ENCODE measurements at regions of chr2 and their contacts with region 1.

Region 1: GRCh38 chr2:98909317-98910211 is 26.5 kb downstream of the CRACDL start:
- DNase-seq: peak; percentile 91
- H3K4me3 ChIP-seq: peak overlapping the region in 1 of 3 experiments; percentile 25
- H3K27ac ChIP-seq: peak overlapping the region; percentile 84
- H3K4me1 ChIP-seq: peaks cover 38% of the 10 kb centered on the region
- H3K27me3 ChIP-seq: no peaks in the 10 kb centered on the region
- CTCF ChIP-seq: no peak
- POLR2A ChIP-seq: no peak

Region 2: DNA sequence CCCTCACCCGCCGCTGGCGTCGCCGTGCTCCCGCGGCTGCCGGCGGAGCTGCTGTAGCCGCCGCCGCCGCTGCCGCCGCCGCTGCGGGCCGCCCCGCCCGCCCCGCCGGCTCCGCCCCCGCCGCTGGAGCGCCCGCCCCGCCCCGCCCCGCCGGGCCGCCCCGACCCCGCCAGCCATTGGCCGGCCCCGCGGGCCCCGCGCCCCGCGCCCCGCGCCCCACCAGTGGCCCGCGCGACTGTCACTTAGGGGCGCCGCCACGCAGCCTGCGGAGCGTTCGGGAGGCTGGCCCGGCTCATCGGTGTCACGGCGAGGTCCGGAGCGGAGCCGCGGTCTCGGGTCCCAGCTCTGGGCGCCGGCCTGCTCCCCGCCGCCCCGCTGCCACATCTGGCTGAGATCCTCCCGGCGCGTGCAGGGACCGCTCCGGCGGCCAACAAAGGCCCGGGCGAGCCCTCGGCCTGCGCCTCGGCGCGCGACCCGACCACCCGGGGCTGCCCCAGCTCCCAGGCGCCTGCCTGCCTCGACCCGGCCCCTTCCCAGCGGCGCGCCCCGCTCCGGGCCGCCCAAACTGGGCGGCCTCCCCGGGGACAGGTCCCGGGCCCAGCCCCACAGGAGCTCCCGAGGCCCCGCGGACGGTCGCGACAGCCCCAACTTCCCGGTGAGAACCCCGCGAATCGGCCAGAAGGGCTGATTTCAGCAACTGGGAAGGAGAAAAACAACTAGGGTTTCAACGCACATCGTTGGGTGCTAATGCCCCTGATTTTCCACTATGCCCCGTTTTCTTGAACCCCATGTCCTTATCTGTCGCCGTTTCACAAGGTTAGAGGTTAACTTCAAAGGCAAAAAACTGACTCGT is 178.3 kb before region 1 on chr2 and contains the start of gene MGAT4A:
- CTCF ChIA-PET with region 1: no interaction called
- POLR2A ChIA-PET with region 1: no interaction called
- dilution Hi-C with region 1: no loop called
- intact Hi-C with region 1: loop called (anchors 10 kb)
- DNase-seq: peak; percentile 52
- H3K4me3 ChIP-seq: peak within 1 kb of the TSS; percentile 64 to 97 (median 77)
- H3K27ac ChIP-seq: peak within 1 kb of the TSS; percentile 60
- H3K4me1 ChIP-seq: peaks cover 48% of the 10 kb centered on the region
- H3K27me3 ChIP-seq: no peaks in the 10 kb centered on the region
- CTCF ChIP-seq: no peak
- POLR2A ChIP-seq: peak; percentile 68
- total RNA-seq, gene MGAT4A: 42.2 and 47.6 TPM in 2 replicates

Region 3: GRCh38 chr2:98869940-98870263 is 39.7 kb before region 1 on chr2:
- CTCF ChIA-PET with region 1: interaction called, 3 read pairs
- POLR2A ChIA-PET with region 1: no interaction called
- dilution Hi-C with region 1: no loop called
- intact Hi-C with region 1: loop called (anchors 1 kb)
- DNase-seq: no peak
- H3K4me3 ChIP-seq: no peak overlapping the region
- H3K27ac ChIP-seq: no peak overlapping the region
- H3K4me1 ChIP-seq: peaks cover 19% of the 10 kb centered on the region
- H3K27me3 ChIP-seq: no peaks in the 10 kb centered on the region
- CTCF ChIP-seq: no peak
- POLR2A ChIP-seq: no peak

Region 4: DNA sequence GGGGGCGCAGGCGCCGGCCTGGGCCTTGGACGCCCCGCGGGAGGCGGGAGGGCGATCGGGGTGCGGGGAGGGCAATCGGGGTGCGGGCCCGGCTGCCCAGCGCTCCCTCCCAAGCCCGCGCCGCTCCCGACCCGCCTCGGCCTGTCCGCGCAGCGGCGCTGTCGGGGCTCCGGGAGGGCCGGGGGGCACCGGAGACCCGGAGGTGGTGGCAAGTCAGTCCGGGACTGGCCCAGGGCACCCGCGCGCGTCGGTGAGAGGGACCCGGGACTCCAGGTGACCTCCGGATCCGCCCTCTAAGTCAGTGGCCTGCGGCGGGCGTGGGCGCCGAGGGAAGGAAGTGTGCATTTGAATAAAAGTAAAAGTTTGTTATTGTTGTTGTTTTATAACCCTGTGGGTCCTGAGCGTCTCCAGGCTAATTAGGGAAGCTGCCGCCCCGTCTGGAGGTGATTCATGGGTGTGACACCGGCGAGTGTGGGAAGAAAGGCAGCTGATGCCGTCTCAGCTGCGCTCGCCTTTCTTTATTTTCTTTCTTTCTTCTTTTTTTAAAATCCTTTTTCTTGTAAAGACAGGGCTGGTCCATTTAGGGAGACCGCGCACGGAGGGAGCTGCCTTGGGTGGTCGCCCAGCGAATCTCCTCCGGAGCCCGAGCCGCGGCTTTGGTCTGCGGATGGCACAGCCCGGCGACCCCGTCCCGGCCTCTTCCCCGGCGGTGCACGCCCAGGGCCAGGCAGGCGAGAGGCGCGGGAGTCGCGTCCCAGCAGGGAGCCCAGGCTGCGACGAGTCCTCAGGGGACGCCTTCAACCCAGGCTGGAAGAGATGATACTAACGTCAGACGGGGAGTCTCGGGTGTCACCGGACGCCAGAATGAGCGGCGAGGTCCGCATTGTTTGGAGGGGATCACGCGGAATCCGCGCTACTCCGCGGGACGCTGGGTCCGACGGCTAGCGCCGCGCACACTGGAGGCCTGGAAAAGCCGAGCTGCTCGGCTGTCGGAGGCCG is 27.1 kb after region 1 on chr2:
- CTCF ChIA-PET with region 1: interaction called, 10 read pairs
- POLR2A ChIA-PET with region 1: no interaction called
- dilution Hi-C with region 1: no loop called
- intact Hi-C with region 1: no loop called
- DNase-seq: peak; percentile 24
- H3K4me3 ChIP-seq: peak overlapping the region; percentile 24 to 46 (median 43)
- H3K27ac ChIP-seq: no peak overlapping the region
- H3K4me1 ChIP-seq: peaks cover 7% of the 10 kb centered on the region
- H3K27me3 ChIP-seq: peaks cover 30 to 39% of the 10 kb centered on the region in 2 experiments
- CTCF ChIP-seq: peak; percentile 15 to 49
- POLR2A ChIP-seq: no peak

Region 5: DNA sequence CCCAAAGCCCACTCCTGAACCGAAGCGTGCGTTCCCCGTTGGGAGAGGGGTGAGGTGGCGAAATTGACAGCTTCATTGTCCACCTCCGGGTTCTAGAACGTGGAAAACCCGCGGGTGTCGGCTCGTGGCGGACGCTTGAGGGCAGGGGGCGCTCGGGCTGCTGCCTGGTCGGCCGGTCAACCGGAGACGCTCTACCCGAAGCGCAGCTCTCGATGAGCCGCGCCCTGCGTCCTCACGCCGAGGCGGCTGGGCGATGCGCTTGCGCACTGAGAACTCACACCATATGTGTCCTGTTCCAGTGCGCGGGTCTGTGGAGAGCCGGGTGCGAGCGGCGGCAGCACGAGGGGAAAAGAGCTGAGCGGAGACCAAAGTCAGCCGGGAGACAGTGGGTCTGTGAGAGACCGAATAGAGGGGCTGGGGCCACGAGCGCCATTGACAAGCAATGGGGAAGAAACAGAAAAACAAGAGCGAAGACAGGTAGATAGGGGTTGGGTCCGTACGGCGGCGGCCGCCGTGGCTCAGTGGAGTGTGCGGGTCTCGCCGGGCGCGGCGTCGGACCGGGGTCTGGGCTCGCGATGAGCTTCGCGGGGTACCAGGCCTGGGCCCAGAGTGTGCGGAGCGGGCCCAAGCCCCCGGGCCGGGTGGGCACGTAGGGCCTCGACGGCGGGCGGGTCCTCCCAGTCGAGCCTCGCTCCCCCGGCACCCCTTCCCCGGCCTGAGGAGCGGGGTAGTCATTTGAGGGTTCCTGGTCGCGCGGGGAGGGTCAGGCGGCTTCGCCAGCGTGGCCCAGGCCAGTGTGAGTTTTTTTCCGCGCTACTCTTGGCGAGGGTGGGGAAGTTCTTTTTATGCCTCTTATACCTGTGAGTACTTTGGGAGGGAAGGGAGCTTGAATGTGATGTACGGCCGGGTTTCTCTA is 427.8 kb after region 1 on chr2 and contains the start of gene EIF5B:
- CTCF ChIA-PET with region 1: no interaction called
- POLR2A ChIA-PET with region 1: no interaction called
- dilution Hi-C with region 1: no loop called
- intact Hi-C with region 1: loop called (anchors 5 kb)
- DNase-seq: peak; percentile 98
- H3K4me3 ChIP-seq: peak within 1 kb of the TSS; percentile 89 to 96 (median 91)
- H3K27ac ChIP-seq: peak within 1 kb of the TSS; percentile 68
- H3K4me1 ChIP-seq: peaks cover 20% of the 10 kb centered on the region
- H3K27me3 ChIP-seq: no peaks in the 10 kb centered on the region
- CTCF ChIP-seq: peak; percentile 57 to 75
- POLR2A ChIP-seq: peak; percentile 89
- total RNA-seq, gene EIF5B: 53.5 and 54.5 TPM in 2 replicates